Right lobe of liver (tissue), 6 donors: ENCODE measurements at regions of chr17 and their contacts with region 1.

Region 1: DNA sequence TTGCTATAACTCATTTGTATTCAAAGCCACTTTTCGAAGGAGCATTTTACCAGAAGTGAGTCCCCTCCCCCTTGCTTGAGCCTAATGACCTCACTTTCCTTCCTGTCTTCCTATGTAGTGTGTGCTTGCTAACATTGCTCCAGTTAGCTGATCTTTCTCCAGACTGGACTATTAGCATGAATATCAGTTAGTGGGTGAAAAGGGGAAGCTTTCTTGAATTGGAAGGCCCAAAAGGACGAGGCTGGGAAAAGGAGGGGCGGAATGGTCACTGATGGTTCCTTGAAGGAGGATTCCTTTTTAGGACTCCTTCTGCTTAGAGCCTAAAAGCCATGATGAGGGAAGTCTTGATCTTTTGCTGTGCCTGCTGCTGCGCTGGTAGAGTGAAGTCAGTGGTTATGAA is 11.9 kb downstream of the MAP3K3 start:
- DNase-seq: no peak
- ATAC-seq: peak; percentile 53 to 78 (median 68)
- H3K4me3 ChIP-seq: no peak overlapping the region
- H3K27ac ChIP-seq: peak overlapping the region in 2 of 3 donors; percentile 12 to 16
- H3K4me1 ChIP-seq: peaks cover 0 to 18% (median 7%) of the 10 kb centered on the region in 4 donors
- H3K27me3 ChIP-seq: no peaks in the 10 kb centered on the region
- CTCF ChIP-seq: no peak
- POLR2A ChIP-seq: no peak

Region 2: DNA sequence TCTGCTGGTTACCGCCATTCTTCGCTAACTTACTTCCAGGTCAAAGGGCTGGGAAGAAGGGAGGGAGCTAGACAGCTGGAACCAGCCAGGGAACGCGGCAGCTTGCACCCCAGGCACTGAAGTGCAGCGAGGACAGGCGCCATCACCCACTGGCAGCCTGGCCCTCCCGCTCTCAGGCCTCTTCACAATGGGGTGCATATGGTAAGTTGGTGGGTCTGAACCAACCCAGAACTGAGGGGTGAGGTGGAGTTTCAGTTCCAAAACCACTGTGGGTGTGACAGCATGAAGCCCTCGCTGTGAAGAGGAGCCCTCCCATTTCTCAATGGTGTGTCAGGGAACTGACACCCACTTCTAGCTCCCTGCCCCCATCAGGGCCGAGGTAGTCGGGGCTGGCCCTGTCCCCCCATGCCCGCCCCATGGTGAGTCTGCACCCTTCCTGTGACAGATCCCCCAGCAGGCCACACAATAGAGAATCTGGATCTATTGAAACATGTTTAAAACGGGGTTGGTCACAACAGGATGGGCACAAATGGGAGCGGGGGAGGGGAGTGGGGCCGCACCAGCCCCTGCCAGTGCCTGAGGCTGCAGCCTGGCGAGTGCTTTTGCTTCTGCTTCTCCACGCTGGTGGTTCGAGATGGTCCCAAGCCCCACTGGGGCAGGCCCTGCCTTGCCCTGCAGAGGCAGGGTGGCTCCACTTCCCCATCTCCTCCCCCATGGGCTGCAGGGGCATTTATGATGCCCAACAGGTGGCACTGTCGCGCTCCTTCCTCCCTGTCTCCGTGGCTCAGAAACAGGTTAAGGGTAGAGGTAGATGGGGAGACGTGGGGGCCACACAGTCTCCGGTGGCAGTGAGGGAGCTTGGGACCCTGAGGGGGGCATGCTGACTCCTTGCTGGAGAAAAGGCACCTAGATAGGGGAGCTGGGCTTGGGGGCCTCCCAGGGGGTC is 63.5 kb after region 1 on chr17:
- intact Hi-C with region 1: loop called in 1 of 2 experiments (anchors 10 kb)
- DNase-seq: peak; percentile 65 to 76 (median 71)
- ATAC-seq: peak; percentile 49 to 57 (median 54)
- H3K4me3 ChIP-seq: peak overlapping the region; percentile 41 to 54 (median 44)
- H3K27ac ChIP-seq: peak overlapping the region in 2 of 3 donors; percentile 67 to 68
- H3K4me1 ChIP-seq: peaks cover 0 to 18% (median 8%) of the 10 kb centered on the region in 4 donors
- H3K27me3 ChIP-seq: no peaks in the 10 kb centered on the region
- CTCF ChIP-seq: peak; percentile 38 to 67 (median 59)
- POLR2A ChIP-seq: no peak